H1 (cell line): ENCODE measurements at regions of chr17 and their contacts with region 1.

Region 1: GRCh38 chr17:38667099-38667786 is 7.5 kb downstream of the EPOP start:
- DNase-seq: peak; percentile 51 to 78
- H3K4me3 ChIP-seq: no peak overlapping the region
- H3K27ac ChIP-seq: no peak overlapping the region
- H3K4me1 ChIP-seq: peaks cover 4 to 28% (median 16%) of the 10 kb centered on the region in 4 experiments; a peak in 6 of 7 replicates
- H3K27me3 ChIP-seq: peaks cover 26 to 49% (median 46%) of the 10 kb centered on the region in 4 experiments
- CTCF ChIP-seq: peak; percentile 98 to 100 (median 99)
- EP300 ChIP-seq: no peak
- POLR2A ChIP-seq: no peak
- RAD21 ChIP-seq: peak; percentile 100

Region 2: GRCh38 chr17:38498186-38498752 is 169.0 kb before region 1 on chr17:
- CTCF ChIA-PET with region 1: interaction called, 25 read pairs
- POLR2A ChIA-PET with region 1: no interaction called
- DNase-seq: no peak
- H3K4me3 ChIP-seq: no peak overlapping the region
- H3K27ac ChIP-seq: no peak overlapping the region
- H3K4me1 ChIP-seq: no peaks in the 10 kb centered on the region; a peak in 1 of 7 replicates
- H3K27me3 ChIP-seq: no peaks in the 10 kb centered on the region
- CTCF ChIP-seq: peak; percentile 20 to 40 (median 32); a peak in 3 of 4 replicates
- EP300 ChIP-seq: no peak
- POLR2A ChIP-seq: no peak
- RAD21 ChIP-seq: peak in 1 of 2 experiments; percentile 17; a peak in 1 of 4 replicates

Region 3: DNA sequence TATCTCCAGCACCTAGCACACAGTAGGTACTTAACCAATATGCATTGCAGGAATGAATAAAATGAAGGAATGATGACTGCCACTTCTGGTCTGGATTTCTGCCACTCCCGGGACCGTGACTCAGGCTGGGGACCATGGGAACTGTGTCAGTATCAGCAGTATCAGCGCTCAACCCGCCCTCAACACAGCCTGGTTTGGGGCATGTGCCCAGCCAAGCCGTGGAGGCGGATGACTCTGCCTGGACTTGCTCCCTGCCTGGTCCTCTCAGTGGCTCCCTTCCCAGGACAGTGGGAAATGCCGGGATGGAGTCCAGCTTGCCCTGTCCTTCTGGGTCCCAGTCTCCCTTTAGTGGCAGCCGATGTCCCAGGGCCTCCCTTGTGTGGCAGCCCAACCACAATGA is 116.6 kb before region 1 on chr17:
- CTCF ChIA-PET with region 1: interaction called, 109 read pairs
- POLR2A ChIA-PET with region 1: no interaction called
- DNase-seq: no peak
- H3K4me3 ChIP-seq: no peak overlapping the region
- H3K27ac ChIP-seq: no peak overlapping the region
- H3K4me1 ChIP-seq: peaks cover 0 to 5% (median 0%) of the 10 kb centered on the region in 4 experiments; a peak in 3 of 7 replicates
- H3K27me3 ChIP-seq: no peaks in the 10 kb centered on the region; a peak in 1 of 7 replicates
- CTCF ChIP-seq: no peak
- EP300 ChIP-seq: no peak
- POLR2A ChIP-seq: no peak
- RAD21 ChIP-seq: no peak

Region 4: GRCh38 chr17:38572669-38573365 is 94.4 kb before region 1 on chr17:
- CTCF ChIA-PET with region 1: interaction called, 366 read pairs
- POLR2A ChIA-PET with region 1: interaction called, 4 read pairs
- DNase-seq: no peak
- H3K4me3 ChIP-seq: peak overlapping the region; percentile 27 to 57 (median 42)
- H3K27ac ChIP-seq: no peak overlapping the region
- H3K4me1 ChIP-seq: peaks cover 6 to 15% (median 12%) of the 10 kb centered on the region in 4 experiments
- H3K27me3 ChIP-seq: peaks cover 37 to 97% (median 92%) of the 10 kb centered on the region in 4 experiments
- CTCF ChIP-seq: no peak
- EP300 ChIP-seq: peak in 1 of 2 experiments; percentile 10; a peak in 1 of 3 replicates
- POLR2A ChIP-seq: no peak
- RAD21 ChIP-seq: no peak

Region 5: DNA sequence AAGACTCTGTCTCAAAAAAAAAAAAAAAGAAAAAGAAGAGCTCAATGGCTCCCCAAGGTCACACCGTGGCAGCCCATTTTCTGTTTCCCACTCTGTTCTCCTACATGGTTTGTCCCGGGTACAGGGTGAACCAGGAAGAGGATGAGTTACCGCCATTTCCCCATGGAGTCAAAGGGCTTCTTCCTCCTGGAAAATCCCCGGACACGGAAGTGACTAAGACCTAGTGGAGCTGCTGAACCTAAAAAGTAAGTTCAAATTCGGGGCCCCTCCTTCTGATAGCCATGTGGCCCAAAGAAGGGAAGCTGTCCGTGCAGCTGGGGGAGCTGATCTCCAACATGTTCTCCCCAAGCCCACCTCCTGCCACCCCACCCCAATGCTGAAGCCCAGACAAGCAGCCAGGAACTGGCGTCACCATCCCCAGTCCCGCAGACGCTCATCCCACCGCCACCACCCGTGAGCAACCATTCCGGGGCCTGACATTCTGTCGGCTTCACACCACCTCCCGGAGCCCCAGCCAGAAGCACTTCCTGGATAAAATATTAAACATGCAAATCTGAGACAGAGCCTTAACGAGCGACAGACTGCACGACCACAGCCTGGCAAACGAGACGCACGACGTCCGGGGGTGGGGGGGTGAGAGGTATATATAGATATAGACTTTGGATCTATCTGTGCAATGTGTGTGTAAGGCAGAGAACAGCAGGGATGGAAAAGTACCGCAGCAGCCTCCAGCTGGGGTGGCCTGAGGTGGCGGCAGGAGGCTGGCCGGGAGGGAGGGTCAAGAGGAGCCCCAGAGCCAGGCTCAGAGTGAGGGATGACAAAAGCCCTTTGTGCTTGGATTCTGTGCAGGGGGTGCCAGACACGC is 10.1 kb before region 1 on chr17:
- CTCF ChIA-PET with region 1: interaction called, 52 read pairs
- POLR2A ChIA-PET with region 1: interaction called, 10 read pairs
- DNase-seq: no peak
- H3K4me3 ChIP-seq: no peak overlapping the region
- H3K27ac ChIP-seq: no peak overlapping the region
- H3K4me1 ChIP-seq: peaks cover 0 to 18% (median 4%) of the 10 kb centered on the region in 4 experiments; a peak in 6 of 7 replicates
- H3K27me3 ChIP-seq: peaks cover 0 to 3% (median 0%) of the 10 kb centered on the region in 4 experiments; a peak in 2 of 7 replicates
- CTCF ChIP-seq: no peak
- EP300 ChIP-seq: no peak
- POLR2A ChIP-seq: no peak
- RAD21 ChIP-seq: no peak

Region 6: DNA sequence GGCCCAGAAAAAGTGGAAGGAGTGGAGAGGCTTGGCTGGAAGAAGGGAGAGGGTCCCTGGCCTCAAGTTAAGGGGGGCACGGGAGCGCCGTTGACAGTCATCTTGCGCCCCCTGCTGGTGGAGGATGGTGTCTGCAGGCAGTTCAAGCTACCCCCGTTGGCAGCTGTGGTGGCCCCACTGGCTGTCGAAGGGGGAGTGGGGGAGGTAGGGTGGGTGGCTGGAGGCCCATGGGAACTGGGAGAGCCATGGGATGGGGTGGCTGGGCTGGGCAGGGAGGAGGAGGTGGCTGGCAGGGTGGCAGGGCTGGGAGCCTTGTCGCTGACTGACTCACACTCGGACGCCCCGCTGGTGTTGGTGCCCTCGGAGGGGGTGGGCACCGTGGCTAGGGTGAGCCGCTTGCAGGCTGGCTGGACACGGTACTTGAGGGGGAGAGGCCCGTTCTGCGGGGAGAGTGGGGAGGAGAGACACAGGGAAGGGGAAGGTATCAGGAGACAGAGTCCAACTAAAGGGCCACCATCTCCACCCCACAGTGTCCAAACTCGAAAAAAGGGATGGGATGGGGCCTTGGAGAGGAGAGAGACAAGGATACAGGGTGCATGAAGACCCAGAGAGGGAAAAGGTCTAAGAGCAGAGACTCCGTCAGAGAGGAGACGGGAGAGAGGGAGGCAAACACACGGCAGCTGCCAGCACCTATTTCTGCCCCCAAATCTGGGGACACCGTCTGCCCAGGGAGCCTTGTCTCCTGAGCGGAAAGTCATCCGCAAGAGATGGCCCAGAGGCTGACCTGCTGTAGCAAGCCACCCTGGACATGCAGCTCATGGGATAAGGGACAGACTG is 68.1 kb after region 1 on chr17:
- CTCF ChIA-PET with region 1: interaction called, 34 read pairs
- POLR2A ChIA-PET with region 1: interaction called, 4 read pairs
- DNase-seq: peak in 1 of 2 experiments; percentile 93
- H3K4me3 ChIP-seq: no peak overlapping the region
- H3K27ac ChIP-seq: no peak overlapping the region
- H3K4me1 ChIP-seq: peaks cover 0 to 12% (median 6%) of the 10 kb centered on the region in 4 experiments; a peak in 5 of 7 replicates
- H3K27me3 ChIP-seq: no peaks in the 10 kb centered on the region
- CTCF ChIP-seq: peak; percentile 85 to 99 (median 93)
- EP300 ChIP-seq: no peak
- POLR2A ChIP-seq: no peak
- RAD21 ChIP-seq: peak; percentile 87 to 89